T-cell (primary cell): ENCODE measurements at regions of chr19 and their contacts with region 1.

Region 1: GRCh38 chr19:55362990-55363716 is at the start of gene GARIN5B:
- DNase-seq: no peak
- ATAC-seq: no peak
- H3K4me3 ChIP-seq: no peak within 1 kb of the TSS
- H3K4me3 Mint-ChIP-seq: no peak within 1 kb of the TSS
- H3K27ac ChIP-seq: no peak within 1 kb of the TSS
- H3K27ac Mint-ChIP-seq: no peak within 1 kb of the TSS
- H3K4me1 ChIP-seq: no peaks in the 10 kb centered on the region
- H3K4me1 Mint-ChIP-seq: peaks cover 0 to 2% (median 0%) of the 10 kb centered on the region in 3 donors
- H3K27me3 ChIP-seq: peaks cover 0 to 44% of the 10 kb centered on the region in 2 experiments
- H3K27me3 Mint-ChIP-seq: peaks cover 0 to 8% of the 10 kb centered on the region in 2 donors
- total RNA-seq, gene GARIN5B: not detected

Region 2: GRCh38 chr19:55319785-55320184 is 43.4 kb before region 1 on chr19:
- CTCF ChIA-PET with region 1: no interaction called
- POLR2A ChIA-PET with region 1: interaction called in 1 of 2 experiments, 10 read pairs
- DNase-seq: no peak
- ATAC-seq: no peak
- H3K4me3 ChIP-seq: no peak overlapping the region
- H3K4me3 Mint-ChIP-seq: no peak overlapping the region
- H3K27ac ChIP-seq: no peak overlapping the region
- H3K27ac Mint-ChIP-seq: no peak overlapping the region
- H3K4me1 ChIP-seq: no peaks in the 10 kb centered on the region
- H3K4me1 Mint-ChIP-seq: no peaks in the 10 kb centered on the region
- H3K27me3 ChIP-seq: peaks cover 0 to 29% of the 10 kb centered on the region in 2 experiments
- H3K27me3 Mint-ChIP-seq: peaks cover 5 to 13% of the 10 kb centered on the region in 2 donors

Region 3: DNA sequence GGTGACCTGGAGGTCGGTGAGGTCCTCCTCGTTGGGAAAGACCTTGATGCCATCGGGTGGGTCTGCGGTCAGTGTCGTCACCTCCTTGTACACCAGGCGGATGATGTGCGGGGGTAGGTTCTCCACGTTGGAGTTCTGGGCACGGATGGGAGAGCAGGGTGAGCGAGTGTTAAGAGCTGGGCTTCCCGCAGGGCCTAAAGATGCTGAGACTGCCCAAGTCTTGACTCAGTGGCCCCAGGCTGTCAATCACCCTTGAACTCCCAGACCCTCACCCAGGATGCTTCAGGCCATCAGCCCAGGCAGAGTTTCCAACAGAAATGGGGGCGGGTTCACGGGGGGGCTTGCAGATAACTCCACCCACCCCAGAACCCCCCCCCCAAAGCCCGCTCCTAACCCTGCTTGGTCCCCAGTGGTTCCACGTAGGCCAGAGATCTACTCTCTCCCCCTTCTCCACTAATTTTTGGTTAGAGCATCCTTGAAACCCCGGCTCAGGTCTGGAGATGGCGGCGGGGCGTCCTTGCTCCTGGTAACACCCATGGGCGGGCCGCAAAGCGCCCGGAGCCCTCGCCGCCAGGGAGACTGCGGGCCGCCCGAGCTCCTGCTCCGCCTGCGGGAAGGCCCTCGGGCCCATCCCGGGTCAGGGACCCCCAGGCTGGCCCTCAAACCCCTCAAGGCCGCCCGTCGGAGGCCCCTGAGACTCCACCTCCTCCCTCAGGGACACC is 43.8 kb after region 1 on chr19:
- CTCF ChIA-PET with region 1: no interaction called
- POLR2A ChIA-PET with region 1: no interaction called
- DNase-seq: peak in 11 of 35 experiments; percentile 16 to 49 (median 26)
- ATAC-seq: peak; percentile 0 to 4 (median 2)
- H3K4me3 ChIP-seq: peak overlapping the region; percentile 54 to 79
- H3K4me3 Mint-ChIP-seq: peak overlapping the region; percentile 78 to 93 (median 93)
- H3K27ac ChIP-seq: peak overlapping the region; percentile 55
- H3K27ac Mint-ChIP-seq: peak overlapping the region; percentile 25 to 70
- H3K4me1 ChIP-seq: peaks cover 6 to 32% of the 10 kb centered on the region in 2 experiments
- H3K4me1 Mint-ChIP-seq: peaks cover 24 to 32% (median 29%) of the 10 kb centered on the region in 3 donors
- H3K27me3 ChIP-seq: no peaks in the 10 kb centered on the region
- H3K27me3 Mint-ChIP-seq: no peaks in the 10 kb centered on the region

Region 4: GRCh38 chr19:55624109-55625003 is 261.2 kb after region 1 on chr19 and contains the start of gene ZNF784:
- CTCF ChIA-PET with region 1: no interaction called
- POLR2A ChIA-PET with region 1: no interaction called
- DNase-seq: peak; percentile 85 to 97 (median 91)
- ATAC-seq: peak; percentile 68 to 86 (median 78)
- H3K4me3 ChIP-seq: peak within 1 kb of the TSS; percentile 52 to 58
- H3K4me3 Mint-ChIP-seq: peak within 1 kb of the TSS; percentile 84 to 87 (median 86)
- H3K27ac ChIP-seq: peak within 1 kb of the TSS; percentile 88
- H3K27ac Mint-ChIP-seq: peak within 1 kb of the TSS; percentile 94 to 95
- H3K4me1 ChIP-seq: peaks cover 30 to 44% of the 10 kb centered on the region in 2 experiments
- H3K4me1 Mint-ChIP-seq: peaks cover 54 to 58% (median 55%) of the 10 kb centered on the region in 3 donors
- H3K27me3 ChIP-seq: peaks cover 0 to 3% of the 10 kb centered on the region in 2 experiments
- H3K27me3 Mint-ChIP-seq: no peaks in the 10 kb centered on the region
- total RNA-seq, gene ZNF784: 7.2 to 13.3 (median 8.2) TPM